ENCODE measurements at regions of chr12 and their contacts with region 1.

Region 1: GRCh38 chr12:70379846-70380245 is 13.8 kb downstream of the KCNMB4 start:
- DNase-seq: peak; percentile 46
- H3K4me3 Mint-ChIP-seq: no peak overlapping the region
- H3K27ac Mint-ChIP-seq: peak overlapping the region; percentile 27
- H3K4me1 Mint-ChIP-seq: peaks cover 13% of the 10 kb centered on the region
- H3K27me3 Mint-ChIP-seq: no peaks in the 10 kb centered on the region

Region 2: GRCh38 chr12:69932676-69933552 is 446.9 kb before region 1 on chr12:
- CTCF ChIA-PET with region 1: no interaction called
- intact Hi-C with region 1: no loop called
- DNase-seq: no peak
- H3K4me3 Mint-ChIP-seq: no peak overlapping the region
- H3K27ac Mint-ChIP-seq: no peak overlapping the region
- H3K4me1 Mint-ChIP-seq: no peaks in the 10 kb centered on the region
- H3K27me3 Mint-ChIP-seq: peaks cover 4% of the 10 kb centered on the region

Region 3: DNA sequence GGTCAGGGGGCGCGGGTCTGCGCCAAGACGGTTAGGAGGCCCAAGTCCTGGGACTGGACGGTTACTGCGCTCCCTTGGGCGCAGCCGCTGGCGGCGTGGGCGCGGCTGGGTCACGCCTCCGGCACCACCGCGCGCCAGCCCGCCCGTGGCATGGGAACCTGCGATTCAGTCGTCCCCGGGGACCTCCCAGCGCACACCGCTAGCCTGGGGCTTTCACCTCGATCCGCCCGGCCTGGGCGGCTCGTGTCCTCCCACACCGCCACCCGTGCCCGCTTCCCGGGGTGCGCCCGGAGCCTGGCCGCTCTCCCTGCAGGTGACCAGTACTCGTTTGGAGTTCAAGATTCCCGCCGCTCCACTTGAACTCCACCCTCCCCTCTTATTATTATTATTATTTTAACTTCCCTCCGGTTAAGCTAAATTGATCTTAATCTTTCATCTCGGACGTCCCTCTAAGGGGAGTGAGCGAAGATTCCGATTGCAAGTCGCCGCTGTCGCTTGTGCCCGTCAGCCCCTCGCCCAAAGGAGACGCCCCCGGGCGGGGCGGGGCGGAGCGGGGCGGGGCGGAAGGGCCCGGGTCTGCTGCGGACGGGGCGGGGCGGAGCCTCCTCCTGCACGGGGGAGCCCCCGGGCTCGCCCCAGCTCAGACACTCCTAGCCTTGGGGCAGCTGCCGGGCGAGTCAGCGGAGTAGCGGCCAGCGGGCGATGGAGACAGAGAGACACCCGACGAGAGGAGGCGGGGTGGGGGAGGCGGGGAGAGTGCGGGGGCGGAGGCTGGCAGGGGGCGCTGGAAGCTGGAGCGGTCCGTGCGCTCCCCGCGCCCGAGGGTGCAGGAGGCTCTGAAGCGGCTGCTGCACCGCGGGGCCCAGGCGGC is 14.0 kb before region 1 on chr12 and contains the start of gene KCNMB4:
- CTCF ChIA-PET with region 1: interaction called, 4 read pairs
- intact Hi-C with region 1: loop called (anchors 2 kb)
- DNase-seq: peak; percentile 75
- H3K4me3 Mint-ChIP-seq: peak within 1 kb of the TSS; percentile 90
- H3K27ac Mint-ChIP-seq: no peak within 1 kb of the TSS
- H3K4me1 Mint-ChIP-seq: peaks cover 18% of the 10 kb centered on the region
- H3K27me3 Mint-ChIP-seq: peaks cover 10% of the 10 kb centered on the region
- total RNA-seq, gene KCNMB4: 0.54 to 0.60 TPM

Region 4: GRCh38 chr12:70652451-70652850 is 272.6 kb after region 1 on chr12:
- CTCF ChIA-PET with region 1: no interaction called
- intact Hi-C with region 1: no loop called
- DNase-seq: no peak
- H3K4me3 Mint-ChIP-seq: no peak overlapping the region
- H3K27ac Mint-ChIP-seq: no peak overlapping the region
- H3K4me1 Mint-ChIP-seq: no peaks in the 10 kb centered on the region
- H3K27me3 Mint-ChIP-seq: no peaks in the 10 kb centered on the region

Measured in activated naive CD4-positive, alpha-beta T cell treated with anti-CD3 and anti-CD28 coated beads for 36 hours (primary cell).